A549 (cell line): ENCODE measurements at regions of chr1 and their contacts with region 1.

Region 1: GRCh38 chr1:161440312-161440894 is 64.9 kb upstream of the FCGR2A start:
- DNase-seq: peak; percentile 78 to 89
- ATAC-seq: peak; percentile 58
- H3K4me3 ChIP-seq: peak overlapping the region; percentile 99
- H3K27ac ChIP-seq: peak overlapping the region; percentile 96 to 99
- H3K4me1 ChIP-seq: no peaks in the 10 kb centered on the region; the same call in 2 of the 3 replicates
- CTCF ChIP-seq: peak; percentile 73
- EP300 ChIP-seq: no peak
- POLR2A ChIP-seq: 0 out of 2 replicates have a peak, but pooled peaks have one; percentile 3
- RAD21 ChIP-seq: 0 out of 5 replicates have a peak, but pooled peaks of 1 of the 2 experiments have one; percentile 12

Region 2: GRCh38 chr1:161427733-161428516 is 12.5 kb before region 1 on chr1:
- CTCF ChIA-PET with region 1: interaction called, 72 read pairs
- POLR2A ChIA-PET with region 1: interaction called, 17 read pairs
- DNase-seq: peak; percentile 51 to 82
- ATAC-seq: peak; percentile 80 to 88
- H3K4me3 ChIP-seq: peak overlapping the region; percentile 57
- H3K27ac ChIP-seq: peak overlapping the region; percentile 28 to 53; a peak in 4 of 6 replicates
- H3K4me1 ChIP-seq: peaks cover 8% of the 10 kb centered on the region; the same call in 2 of the 3 replicates
- CTCF ChIP-seq: no peak
- EP300 ChIP-seq: no peak
- POLR2A ChIP-seq: no peak
- RAD21 ChIP-seq: no peak